Aorta (tissue), 5 donors: ENCODE measurements at regions of chr5 and their contacts with region 1.

Region 1: GRCh38 chr5:73298772-73299630 is 126.0 kb downstream of the TMEM174 start:
- DNase-seq: peak in 1 of 2 donors; percentile 79
- ATAC-seq: peak; percentile 55
- H3K4me3 ChIP-seq: peak overlapping the region in 1 of 2 donors; percentile 5
- H3K27ac ChIP-seq: no peak overlapping the region
- H3K4me1 ChIP-seq: no peaks in the 10 kb centered on the region
- H3K27me3 ChIP-seq: no peaks in the 10 kb centered on the region

Region 2: DNA sequence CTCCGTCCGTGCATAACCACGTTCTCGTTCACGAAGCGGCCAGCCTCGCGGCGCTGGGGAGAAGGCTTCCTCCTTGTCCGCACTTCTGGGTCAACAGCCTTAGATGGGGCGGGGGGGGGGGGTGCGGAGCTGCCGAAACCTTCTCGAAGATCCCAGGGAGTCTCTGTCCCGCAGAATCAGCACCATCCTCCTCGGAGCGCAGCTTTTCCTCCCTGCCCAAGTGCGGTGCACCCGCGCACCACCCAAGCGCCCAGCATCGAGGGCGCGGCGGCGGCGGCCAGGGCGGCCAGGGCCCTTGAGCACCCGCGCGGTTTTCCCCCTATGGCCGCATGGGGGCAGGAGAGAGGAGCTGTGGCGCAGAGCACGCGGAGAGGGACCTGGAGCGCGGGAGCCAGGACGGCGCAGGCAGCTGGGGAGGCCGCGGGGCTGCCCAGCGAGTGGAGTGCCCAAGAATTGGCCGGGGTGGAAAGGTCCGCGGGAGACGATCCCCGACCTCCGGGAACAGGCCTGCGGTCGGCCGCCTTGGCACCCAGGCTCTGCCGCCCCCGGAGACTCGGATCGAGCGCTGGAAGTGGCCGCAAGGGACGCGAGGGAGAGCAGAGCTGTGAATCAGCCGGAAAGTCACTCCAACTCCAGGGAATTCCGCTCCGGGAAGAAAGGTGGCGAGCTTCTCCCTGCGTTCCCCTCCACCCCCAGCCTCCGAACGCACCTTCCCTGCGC is 83.0 kb before region 1 on chr5:
- intact Hi-C with region 1: loop called in 1 of 2 experiments (anchors 5 kb)
- DNase-seq: peak; percentile 84 to 95
- ATAC-seq: peak; percentile 99
- H3K4me3 ChIP-seq: peak overlapping the region in 1 of 2 donors; percentile 4
- H3K27ac ChIP-seq: no peak overlapping the region
- H3K4me1 ChIP-seq: no peaks in the 10 kb centered on the region
- H3K27me3 ChIP-seq: peaks cover 0 to 1% of the 10 kb centered on the region in 2 donors

Region 3: GRCh38 chr5:73495772-73496335 is 196.9 kb after region 1 on chr5:
- intact Hi-C with region 1: no loop called
- DNase-seq: no peak
- ATAC-seq: no peak
- H3K4me3 ChIP-seq: no peak overlapping the region
- H3K27ac ChIP-seq: no peak overlapping the region
- H3K4me1 ChIP-seq: peaks cover 0 to 2% of the 10 kb centered on the region in 2 donors
- H3K27me3 ChIP-seq: no peaks in the 10 kb centered on the region